ENCODE measurements at regions of chr19 and their contacts with region 1.

Region 1: GRCh38 chr19:45584332-45585157 is at the start of gene OPA3:
- DNase-seq: peak; percentile 98
- ATAC-seq: peak; percentile 91
- H3K4me3 ChIP-seq: peak within 1 kb of the TSS; percentile 63 to 80 (median 74)
- H3K27ac ChIP-seq: peak within 1 kb of the TSS; percentile 100
- H3K4me1 ChIP-seq: peaks cover 52% of the 10 kb centered on the region
- H3K27me3 ChIP-seq: no peaks in the 10 kb centered on the region
- CTCF ChIP-seq: peak; percentile 25; the same call in 1 of the 2 replicates
- EP300 ChIP-seq: peak in 1 of 2 experiments; percentile 53; a peak in 1 of 4 replicates
- POLR2A ChIP-seq: peak; percentile 86 to 91
- RAD21 ChIP-seq: peak; percentile 29; the same call in 1 of the 2 replicates
- total RNA-seq, gene OPA3: 7.8 and 8.3 TPM in 2 replicates

Region 2: DNA sequence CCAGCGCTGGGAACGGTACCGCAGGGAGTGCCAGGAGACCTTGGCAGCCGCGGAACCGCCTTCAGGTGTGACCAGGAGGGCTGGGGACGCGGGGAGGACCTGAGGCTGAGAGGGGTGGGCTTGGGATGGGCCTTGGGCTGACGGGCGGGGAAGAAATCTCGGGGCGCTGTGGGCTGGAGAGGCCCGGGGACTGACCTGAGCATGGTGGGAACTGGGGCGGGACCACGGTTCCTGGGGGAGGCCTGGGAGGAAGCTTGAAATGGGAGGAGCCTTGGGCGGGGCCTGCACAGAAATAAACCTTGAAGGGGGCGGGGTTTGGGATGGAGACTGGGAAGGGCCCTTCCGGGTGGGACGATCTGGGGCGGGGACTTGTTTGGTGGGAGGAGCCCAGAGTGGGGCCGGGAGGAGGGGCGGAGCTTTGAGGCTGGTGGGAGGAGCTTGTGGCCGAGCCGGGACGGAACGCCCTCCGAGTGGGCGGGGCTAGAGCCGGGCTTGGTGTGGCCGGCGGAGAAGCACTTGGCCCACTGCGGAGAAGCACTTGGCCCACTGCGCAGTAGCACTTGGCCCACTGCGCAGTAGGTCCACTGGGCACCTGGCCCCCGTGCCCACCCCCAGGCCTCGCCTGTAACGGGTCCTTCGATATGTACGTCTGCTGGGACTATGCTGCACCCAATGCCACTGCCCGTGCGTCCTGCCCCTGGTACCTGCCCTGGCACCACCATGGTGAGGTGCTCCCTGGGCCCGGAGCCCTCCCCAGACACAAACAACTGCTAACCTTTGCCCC is 86.3 kb after region 1 on chr19:
- CTCF ChIA-PET with region 1: no interaction called
- POLR2A ChIA-PET with region 1: interaction called, 11 read pairs
- in situ Hi-C with region 1: no loop called
- intact Hi-C with region 1: no loop called
- DNase-seq: peak; percentile 55
- ATAC-seq: peak; percentile 36
- H3K4me3 ChIP-seq: peak overlapping the region in 1 of 3 experiments; percentile 20; a peak in 2 of 6 replicates
- H3K27ac ChIP-seq: no peak overlapping the region
- H3K4me1 ChIP-seq: peaks cover 35% of the 10 kb centered on the region
- H3K27me3 ChIP-seq: peaks cover 2 to 3% of the 10 kb centered on the region in 2 experiments; a peak in 1 of 5 replicates
- CTCF ChIP-seq: no peak
- EP300 ChIP-seq: no peak
- POLR2A ChIP-seq: no peak
- RAD21 ChIP-seq: no peak

Measured in HepG2 (cell line).